ENCODE measurements at regions of chr18 and their contacts with region 1.

Region 1: GRCh38 chr18:74353169-74353775 is 37.6 kb downstream of the C18orf63 start:
- DNase-seq: peak; percentile 27 to 39
- H3K4me3 ChIP-seq: no peak overlapping the region
- H3K27ac ChIP-seq: no peak overlapping the region
- H3K4me1 ChIP-seq: no peaks in the 10 kb centered on the region
- H3K27me3 ChIP-seq: peaks cover 41% of the 10 kb centered on the region
- CTCF ChIP-seq: peak; percentile 75

Region 2: DNA sequence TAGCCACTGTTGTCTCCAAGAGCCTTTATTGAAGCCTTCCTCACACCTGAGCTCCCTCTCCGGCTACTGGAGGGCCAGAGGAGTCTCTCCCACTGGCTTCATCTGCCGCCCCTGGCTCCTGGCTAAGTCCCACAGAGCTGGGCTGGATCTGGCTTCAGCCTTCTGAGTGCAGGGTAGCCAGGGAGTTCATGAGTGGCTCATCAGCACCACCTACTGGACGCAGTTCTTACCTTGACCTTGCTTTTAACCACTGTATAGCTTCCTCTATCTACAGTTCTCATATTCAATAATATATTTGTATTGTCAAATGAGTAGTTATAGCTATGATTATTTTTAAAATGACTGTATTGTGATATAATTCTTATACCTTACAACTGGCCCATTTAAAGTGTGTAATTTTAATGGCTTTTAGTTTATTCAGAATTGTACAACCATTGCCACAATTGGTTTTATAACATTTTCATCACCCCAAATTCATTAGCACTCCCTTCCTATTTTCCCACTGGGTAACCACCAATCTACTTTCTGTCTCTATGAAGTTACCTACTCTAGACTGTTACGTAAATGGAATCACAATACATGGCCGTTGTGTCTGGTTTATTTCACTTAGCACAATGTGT is 198.8 kb after region 1 on chr18:
- CTCF ChIA-PET with region 1: interaction called, 19 read pairs
- POLR2A ChIA-PET with region 1: interaction called, 3 read pairs
- intact Hi-C with region 1: loop called (anchors 1 kb)
- DNase-seq: peak; percentile 56 to 62
- H3K4me3 ChIP-seq: no peak overlapping the region
- H3K27ac ChIP-seq: no peak overlapping the region
- H3K4me1 ChIP-seq: 0 out of 2 replicates have a peak, but pooled peaks cover 2% of the 10 kb centered on the region
- H3K27me3 ChIP-seq: peaks cover 54% of the 10 kb centered on the region
- CTCF ChIP-seq: peak; percentile 95

Region 3: DNA sequence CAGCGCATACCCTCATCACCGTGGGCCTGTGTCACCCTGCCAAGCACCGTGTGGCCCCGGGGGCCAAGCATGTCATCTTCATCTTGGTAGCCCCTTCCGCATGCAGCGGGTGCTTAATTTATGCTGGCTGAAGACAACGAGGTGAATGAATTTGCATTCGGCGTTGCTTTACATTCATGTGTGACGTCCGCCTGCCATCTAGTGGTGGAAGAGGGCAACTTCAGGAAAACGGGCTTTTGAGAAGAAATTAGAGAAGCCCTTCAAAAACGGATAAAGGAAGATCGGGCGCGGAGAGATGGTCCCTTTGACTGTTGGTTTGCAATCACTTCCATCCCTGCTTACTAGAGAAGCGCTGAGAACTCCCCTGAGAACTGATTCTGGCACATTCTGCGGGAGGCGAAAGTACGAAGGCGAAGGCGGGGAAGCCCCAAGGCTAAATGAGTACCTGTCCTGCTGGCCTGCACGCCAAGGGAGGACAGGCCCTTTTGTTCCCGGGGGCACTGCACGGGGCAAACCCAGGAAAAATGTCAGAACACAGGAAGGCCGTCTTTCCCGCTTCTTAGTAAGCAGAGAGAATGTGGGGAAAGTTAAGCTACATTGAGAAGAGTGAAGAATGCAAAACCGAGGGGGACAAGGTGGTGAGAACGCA is 1995.9 kb after region 1 on chr18:
- CTCF ChIA-PET with region 1: no interaction called
- POLR2A ChIA-PET with region 1: no interaction called
- intact Hi-C with region 1: loop called (anchors 5 kb)
- DNase-seq: peak; percentile 44 to 54
- H3K4me3 ChIP-seq: peak overlapping the region; percentile 37; the same call in 1 of the 2 replicates
- H3K27ac ChIP-seq: no peak overlapping the region
- H3K4me1 ChIP-seq: no peaks in the 10 kb centered on the region
- H3K27me3 ChIP-seq: no peaks in the 10 kb centered on the region
- CTCF ChIP-seq: peak; percentile 97

Measured in PC-9 (cell line).